Transverse colon (tissue), 4 donors: ENCODE measurements at regions of chr14 and their contacts with region 1.

Region 1: GRCh38 chr14:92513204-92513973 is at the start of gene RIN3:
- DNase-seq: peak; percentile 61
- H3K4me3 ChIP-seq: peak within 1 kb of the TSS; percentile 46 to 84 (median 64)
- H3K27ac ChIP-seq: peak within 1 kb of the TSS; percentile 88 to 94 (median 92)
- H3K4me1 ChIP-seq: peaks cover 9 to 51% (median 26%) of the 10 kb centered on the region in 4 donors
- H3K27me3 ChIP-seq: no peaks in the 10 kb centered on the region
- CTCF ChIP-seq: no peak
- EP300 ChIP-seq: no peak
- POLR2A ChIP-seq: peak; percentile 49
- total RNA-seq, gene RIN3: 16.2 to 24.3 (median 20.7) TPM

Region 2: DNA sequence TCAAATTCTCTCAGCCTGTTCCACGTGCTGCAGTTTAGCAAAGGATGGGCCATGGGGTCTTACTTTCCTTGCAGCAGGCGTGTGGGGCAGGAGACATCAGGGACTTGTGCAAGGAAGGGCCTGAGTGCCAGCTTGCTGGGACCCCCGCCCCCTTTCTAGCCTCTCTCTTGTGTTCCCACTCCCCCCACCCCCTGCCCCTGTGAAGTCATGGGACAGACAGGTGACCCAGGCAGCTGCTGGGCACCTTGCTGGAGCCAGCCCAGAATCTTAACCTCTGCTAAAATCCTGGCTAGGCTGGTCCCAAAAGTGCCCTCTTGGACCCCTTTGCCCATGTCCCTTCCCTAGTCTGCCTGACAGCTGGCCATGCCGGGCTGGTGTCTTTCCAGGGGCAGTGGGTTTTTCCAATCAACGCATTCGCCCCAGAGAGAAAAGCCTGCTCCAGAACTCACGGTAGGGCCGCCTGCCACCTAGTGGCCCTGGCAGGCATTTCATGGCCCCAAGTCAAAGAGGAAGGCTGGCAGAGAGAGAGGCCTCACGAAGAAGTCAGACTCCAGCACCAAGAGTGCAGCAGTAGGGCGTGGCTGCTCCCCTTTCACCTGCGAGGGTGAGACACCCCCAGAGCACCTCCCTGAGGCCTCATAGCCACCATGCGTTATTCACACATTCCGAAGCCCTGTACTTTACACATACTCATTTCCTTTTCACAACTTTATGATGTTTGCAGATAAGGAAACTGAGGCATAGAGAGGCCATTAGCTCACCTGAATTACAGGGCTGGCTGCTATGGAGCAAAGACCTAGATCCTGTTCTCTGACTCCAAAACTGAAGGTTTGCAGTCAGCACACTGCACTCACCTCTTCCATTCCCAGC is 167.6 kb after region 1 on chr14:
- in situ Hi-C with region 1: no loop called
- intact Hi-C with region 1: loop called (anchors 5 kb)
- DNase-seq: peak; percentile 85
- H3K4me3 ChIP-seq: no peak overlapping the region
- H3K27ac ChIP-seq: peak overlapping the region in 1 of 4 donors; percentile 15
- H3K4me1 ChIP-seq: peaks cover 0 to 11% (median 2%) of the 10 kb centered on the region in 4 donors
- H3K27me3 ChIP-seq: no peaks in the 10 kb centered on the region
- CTCF ChIP-seq: peak; percentile 95 to 96 (median 95)
- EP300 ChIP-seq: no peak
- POLR2A ChIP-seq: no peak

Region 3: DNA sequence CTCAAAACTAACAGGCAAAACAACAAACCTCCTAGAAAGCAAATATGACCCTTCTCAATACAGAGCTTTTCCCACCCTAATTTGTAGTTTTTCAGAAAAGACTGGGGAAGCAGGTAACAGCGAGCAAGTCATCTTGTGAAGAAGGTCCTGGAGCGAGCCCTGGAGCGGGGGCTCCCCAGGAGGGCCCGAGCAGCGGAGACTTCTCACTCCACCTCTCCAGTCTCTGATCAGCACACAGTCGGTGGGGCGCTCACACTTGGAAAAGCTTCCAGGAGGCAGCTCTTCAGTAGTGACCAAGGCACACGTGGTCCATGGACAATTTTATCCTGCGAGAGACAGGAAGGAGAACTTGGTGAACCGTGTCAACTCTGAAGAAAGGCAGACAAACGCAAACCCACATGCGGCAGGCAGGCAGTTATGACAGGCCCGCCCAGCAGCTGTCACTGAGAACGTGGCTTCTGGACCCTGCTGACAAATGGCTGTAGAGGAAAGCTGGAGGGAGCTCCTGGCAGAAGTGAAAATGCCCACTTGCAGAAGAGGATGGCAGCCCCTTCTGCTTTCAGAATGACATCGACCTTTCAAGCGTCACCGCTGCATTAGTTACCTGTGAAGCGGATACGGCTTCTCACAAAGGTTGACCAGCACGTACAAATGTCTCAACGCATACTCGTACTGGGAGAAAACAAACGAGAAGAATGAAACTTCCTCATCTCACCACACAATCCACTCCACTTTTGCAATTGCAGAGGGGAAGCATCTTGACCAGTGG is 190.8 kb after region 1 on chr14:
- in situ Hi-C with region 1: no loop called
- intact Hi-C with region 1: no loop called
- DNase-seq: peak; percentile 66
- H3K4me3 ChIP-seq: no peak overlapping the region
- H3K27ac ChIP-seq: peak overlapping the region in 2 of 4 donors; percentile 1 to 34
- H3K4me1 ChIP-seq: no peaks in the 10 kb centered on the region
- H3K27me3 ChIP-seq: no peaks in the 10 kb centered on the region
- CTCF ChIP-seq: no peak
- EP300 ChIP-seq: no peak
- POLR2A ChIP-seq: no peak